Lower leg skin (tissue), 4 donors: ENCODE measurements at regions of chr3 and their contacts with region 1.

Region 1: DNA sequence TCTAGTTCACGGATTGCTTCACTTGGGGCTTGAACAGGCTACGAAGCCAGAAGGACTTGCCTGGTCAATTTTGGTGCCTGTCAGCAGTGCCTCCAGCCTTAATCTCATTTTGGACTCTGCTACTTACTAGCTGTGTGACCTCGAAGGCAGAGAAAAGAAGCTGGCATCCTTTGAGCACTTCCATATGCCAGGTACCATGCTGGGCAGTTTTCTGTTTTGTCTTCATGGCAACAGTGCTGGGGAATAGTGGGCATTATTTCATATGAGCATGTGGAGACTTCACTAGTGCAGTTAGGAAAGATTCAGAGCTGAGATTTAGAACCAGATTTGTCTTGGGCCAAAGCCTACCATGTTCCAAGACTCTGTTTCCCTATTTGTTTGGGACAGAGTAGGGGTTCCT is 92.2 kb downstream of the LRTM1 start:
- DNase-seq: no peak
- H3K4me3 ChIP-seq: no peak overlapping the region
- CTCF ChIP-seq: no peak
- POLR2A ChIP-seq: no peak

Region 2: GRCh38 chr3:54783611-54784010 is 52.1 kb before region 1 on chr3:
- intact Hi-C with region 1: loop called (anchors 2 kb)
- DNase-seq: no peak
- H3K4me3 ChIP-seq: no peak overlapping the region
- CTCF ChIP-seq: no peak
- POLR2A ChIP-seq: no peak